Activated CD8-positive, alpha-beta T cell treated with anti-CD3 and anti-CD28 coated beads for 36 hours (primary cell): ENCODE measurements at regions of chr19 and their contacts with region 1.

Region 1: GRCh38 chr19:14136509-14137281 is at the start of gene ASF1B:
- DNase-seq: peak; percentile 99
- ATAC-seq: peak; percentile 83
- H3K4me3 Mint-ChIP-seq: peak within 1 kb of the TSS; percentile 95
- H3K27ac Mint-ChIP-seq: peak within 1 kb of the TSS; percentile 98
- H3K4me1 Mint-ChIP-seq: peaks cover 36% of the 10 kb centered on the region
- H3K27me3 Mint-ChIP-seq: no peaks in the 10 kb centered on the region
- CTCF ChIP-seq: peak; percentile 67
- total RNA-seq, gene ASF1B: 53.5 to 55.3 TPM

Region 2: DNA sequence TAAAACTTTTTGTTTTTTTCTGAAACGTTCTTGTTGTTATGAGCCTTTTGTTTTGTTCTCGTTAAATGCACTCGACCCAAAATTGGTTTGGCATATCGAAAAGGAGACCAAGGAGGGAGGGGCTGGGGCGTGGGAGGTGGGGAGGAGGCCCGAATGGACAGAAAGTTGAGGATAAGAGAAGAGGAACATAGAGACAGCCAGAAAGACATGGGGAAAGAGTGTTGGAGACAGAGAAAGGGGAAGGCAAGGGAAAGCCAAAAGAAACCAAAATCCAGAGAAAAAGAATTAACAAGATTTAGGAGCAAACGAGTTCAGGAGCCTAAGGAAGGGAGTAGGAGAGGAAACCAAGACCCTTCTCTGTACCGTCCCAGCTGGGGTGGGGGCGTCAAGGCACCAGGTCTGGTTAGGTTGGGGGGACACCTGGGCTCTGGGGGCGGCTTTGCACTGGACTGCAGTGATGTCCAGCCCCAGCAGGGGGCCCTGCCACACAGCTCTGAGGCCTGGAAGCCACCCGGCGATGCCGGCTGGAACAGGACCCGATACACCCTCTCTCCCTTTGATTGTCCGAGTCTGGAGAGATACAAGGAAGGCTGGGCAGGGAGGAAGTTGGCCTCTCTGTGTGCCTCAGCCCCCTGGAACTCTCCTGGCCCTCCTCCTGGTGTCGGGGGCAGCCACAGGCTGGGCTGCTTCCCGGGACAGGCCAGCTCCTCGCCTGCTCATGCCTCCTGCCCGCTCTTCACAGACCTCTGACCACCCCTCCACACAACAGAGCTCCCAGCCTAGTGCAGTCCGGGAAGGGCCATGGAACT is 11.3 kb after region 1 on chr19:
- CTCF ChIA-PET with region 1: interaction called, 39 read pairs
- POLR2A ChIA-PET with region 1: interaction called, 5 read pairs
- intact Hi-C with region 1: no loop called
- DNase-seq: peak; percentile 73
- ATAC-seq: peak; percentile 78
- H3K4me3 Mint-ChIP-seq: peak overlapping the region; percentile 60
- H3K27ac Mint-ChIP-seq: peak overlapping the region; percentile 88
- H3K4me1 Mint-ChIP-seq: peaks cover 38% of the 10 kb centered on the region
- H3K27me3 Mint-ChIP-seq: no peaks in the 10 kb centered on the region
- CTCF ChIP-seq: peak; percentile 68

Region 3: GRCh38 chr19:14354445-14354844 is 217.8 kb after region 1 on chr19:
- CTCF ChIA-PET with region 1: interaction called, 10 read pairs
- POLR2A ChIA-PET with region 1: no interaction called
- intact Hi-C with region 1: no loop called
- DNase-seq: peak; percentile 26
- ATAC-seq: peak; percentile 38
- H3K4me3 Mint-ChIP-seq: no peak overlapping the region
- H3K27ac Mint-ChIP-seq: no peak overlapping the region
- H3K4me1 Mint-ChIP-seq: peaks cover 22% of the 10 kb centered on the region
- H3K27me3 Mint-ChIP-seq: no peaks in the 10 kb centered on the region
- CTCF ChIP-seq: no peak